ENCODE measurements at regions of chr15 and their contacts with region 1.

Region 1: DNA sequence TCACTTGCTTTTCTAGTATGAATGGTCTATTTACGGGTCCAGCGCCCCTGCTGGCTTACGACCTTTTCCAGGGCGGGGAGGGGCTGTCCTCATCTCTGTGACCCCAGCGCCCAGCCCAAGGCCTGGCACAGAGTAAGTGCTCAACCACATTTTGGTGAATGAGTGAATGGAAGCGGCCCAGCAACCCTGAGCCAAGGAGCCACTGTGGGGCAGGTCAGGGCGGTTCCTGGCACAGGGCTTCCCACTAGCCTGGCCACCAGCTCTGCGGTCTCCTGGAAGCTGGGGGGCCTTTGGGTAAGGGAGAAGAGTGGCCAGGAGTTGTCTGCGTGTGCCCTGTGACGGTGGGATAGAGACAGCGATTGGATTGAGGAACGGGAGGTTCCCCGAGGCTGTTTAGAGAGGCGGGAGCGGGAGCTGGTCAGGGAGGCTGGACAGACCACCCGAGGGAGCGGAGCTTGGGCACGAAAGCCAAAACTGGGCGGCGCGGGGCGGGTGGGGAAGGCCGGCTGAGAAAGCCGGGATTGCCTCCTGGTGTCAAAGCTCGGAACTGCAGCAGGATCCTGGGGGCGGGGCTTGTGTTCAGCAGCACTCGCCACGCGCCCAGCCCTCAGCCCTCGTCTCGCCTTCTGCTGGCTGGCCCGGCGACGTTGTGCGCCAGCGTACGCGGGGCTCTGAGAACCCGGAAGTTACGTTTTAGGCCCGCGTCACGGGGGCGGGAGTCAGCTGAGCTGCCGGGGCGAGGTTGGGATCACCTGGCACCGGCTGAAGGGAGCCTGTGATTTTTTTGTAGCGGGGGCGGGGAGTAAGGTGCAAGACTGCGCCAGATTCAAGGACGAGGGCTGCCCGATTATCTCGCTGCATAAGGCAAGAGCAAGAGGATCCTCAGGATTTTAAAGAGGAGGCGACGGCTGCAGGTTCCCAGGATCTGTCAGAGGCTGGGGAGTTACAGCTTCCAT is at the start of gene VPS18:
- DNase-seq: peak; percentile 96
- H3K4me3 ChIP-seq: peak within 1 kb of the TSS; percentile 86 to 91 (median 88)
- H3K27ac ChIP-seq: peak within 1 kb of the TSS; percentile 86
- H3K4me1 ChIP-seq: peaks cover 14% of the 10 kb centered on the region
- H3K27me3 ChIP-seq: no peaks in the 10 kb centered on the region
- CTCF ChIP-seq: peak; percentile 77 to 95
- POLR2A ChIP-seq: peak; percentile 60
- total RNA-seq, gene VPS18: 32.8 and 33.3 TPM in 2 replicates

Region 2: DNA sequence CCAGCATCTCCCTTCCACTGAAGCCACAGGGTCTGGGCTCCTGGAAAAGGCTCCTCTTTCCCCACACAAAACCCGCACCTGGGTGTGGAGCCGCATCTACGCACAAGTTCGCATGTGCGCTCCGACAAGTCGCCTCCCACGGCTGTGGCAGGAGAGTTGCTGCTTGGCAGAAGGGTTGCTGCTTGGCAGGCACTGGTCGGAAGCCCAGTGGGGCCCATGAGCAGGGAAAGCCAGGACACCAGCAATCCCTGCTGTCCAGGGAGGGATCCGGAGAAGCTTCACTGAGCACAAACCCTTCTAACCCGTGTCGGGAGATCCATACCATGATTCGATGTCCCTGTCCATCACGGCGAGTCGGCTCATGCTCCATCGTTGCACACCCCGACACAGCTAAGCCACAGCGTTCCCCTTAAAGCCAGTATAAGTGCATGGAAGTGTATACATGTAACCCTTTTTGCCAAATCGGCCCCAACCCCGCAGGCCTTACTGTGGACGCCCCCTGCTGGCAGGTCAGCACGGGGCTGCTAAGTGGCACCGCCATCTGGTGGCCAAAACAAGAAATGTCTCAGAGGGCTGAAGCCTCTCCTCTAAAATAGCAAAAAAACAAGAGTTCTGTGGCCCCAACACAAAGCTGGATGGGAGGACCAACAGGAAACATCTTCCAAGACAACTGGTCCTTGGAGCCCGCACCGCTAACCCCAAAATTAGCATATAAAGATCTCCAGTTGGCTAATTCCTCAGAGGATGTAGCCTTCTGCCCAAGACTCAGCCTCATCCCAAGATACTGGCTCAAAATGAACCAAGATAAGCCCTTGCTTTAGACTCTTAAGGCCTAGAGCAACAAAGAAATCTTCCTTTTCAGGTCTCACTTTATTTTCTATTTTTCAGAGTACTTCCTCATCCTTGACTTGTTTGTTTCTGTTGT is 619.4 kb before region 1 on chr15:
- CTCF ChIA-PET with region 1: no interaction called
- POLR2A ChIA-PET with region 1: no interaction called
- dilution Hi-C with region 1: no loop called
- intact Hi-C with region 1: no loop called
- DNase-seq: peak; percentile 82
- H3K4me3 ChIP-seq: no peak overlapping the region
- H3K27ac ChIP-seq: no peak overlapping the region
- H3K4me1 ChIP-seq: no peaks in the 10 kb centered on the region
- H3K27me3 ChIP-seq: peaks cover 17 to 25% of the 10 kb centered on the region in 2 experiments
- CTCF ChIP-seq: peak; percentile 100
- POLR2A ChIP-seq: no peak

Region 3: DNA sequence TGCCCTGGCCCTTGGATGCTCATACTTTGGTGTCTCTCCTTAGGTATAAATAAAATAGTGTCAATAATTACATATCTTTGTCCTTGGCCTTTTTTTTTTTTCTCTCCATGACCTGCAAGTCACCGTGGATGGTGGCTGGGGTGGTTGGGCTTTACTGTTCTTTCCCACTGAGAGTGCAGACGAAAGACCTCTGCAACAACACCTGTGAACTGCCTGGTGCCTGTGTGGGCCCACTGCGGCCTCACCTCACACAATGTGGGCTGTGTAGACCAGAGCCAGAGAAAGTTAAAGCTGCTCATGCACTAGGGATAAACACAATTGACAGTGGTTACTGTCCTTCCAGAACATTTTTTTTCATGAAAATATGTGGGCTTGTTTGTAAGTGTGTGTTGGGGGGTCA is 368.2 kb before region 1 on chr15:
- CTCF ChIA-PET with region 1: interaction called, 12 read pairs
- POLR2A ChIA-PET with region 1: no interaction called
- dilution Hi-C with region 1: no loop called
- intact Hi-C with region 1: no loop called
- DNase-seq: no peak
- H3K4me3 ChIP-seq: no peak overlapping the region
- H3K27ac ChIP-seq: no peak overlapping the region
- H3K4me1 ChIP-seq: no peaks in the 10 kb centered on the region
- H3K27me3 ChIP-seq: no peaks in the 10 kb centered on the region
- CTCF ChIP-seq: no peak
- POLR2A ChIP-seq: no peak

Region 4: DNA sequence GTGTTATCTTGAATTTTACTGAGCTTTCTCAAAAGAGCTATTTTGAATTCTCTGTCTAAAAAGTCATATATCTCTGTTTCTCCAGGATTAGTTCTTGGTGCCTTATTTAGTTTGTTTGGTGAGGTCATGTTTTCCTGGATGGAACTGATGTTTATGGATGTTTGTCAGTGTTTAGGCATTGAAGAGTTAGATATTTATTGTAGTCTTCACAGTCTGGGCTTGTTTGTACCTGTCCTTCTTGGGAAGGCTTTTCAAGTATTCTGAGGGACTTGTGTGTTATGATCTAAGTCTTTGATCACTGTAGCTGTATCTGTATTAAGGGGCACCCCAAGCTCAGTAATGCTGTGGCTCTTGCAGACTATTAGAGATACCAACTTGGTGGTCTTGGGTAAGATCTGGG is 209.6 kb before region 1 on chr15:
- CTCF ChIA-PET with region 1: interaction called, 15 read pairs
- POLR2A ChIA-PET with region 1: no interaction called
- dilution Hi-C with region 1: no loop called
- intact Hi-C with region 1: loop called (anchors 1 kb)
- DNase-seq: no peak
- H3K4me3 ChIP-seq: no peak overlapping the region
- H3K27ac ChIP-seq: no peak overlapping the region
- H3K4me1 ChIP-seq: no peaks in the 10 kb centered on the region
- H3K27me3 ChIP-seq: no peaks in the 10 kb centered on the region
- CTCF ChIP-seq: no peak
- POLR2A ChIP-seq: no peak

Region 5: GRCh38 chr15:40743921-40744814 is 149.8 kb before region 1 on chr15:
- CTCF ChIA-PET with region 1: interaction called, 21 read pairs
- POLR2A ChIA-PET with region 1: no interaction called
- dilution Hi-C with region 1: no loop called
- intact Hi-C with region 1: loop called (anchors 1 kb)
- DNase-seq: no peak
- H3K4me3 ChIP-seq: no peak overlapping the region
- H3K27ac ChIP-seq: no peak overlapping the region
- H3K4me1 ChIP-seq: no peaks in the 10 kb centered on the region
- H3K27me3 ChIP-seq: no peaks in the 10 kb centered on the region
- CTCF ChIP-seq: no peak
- POLR2A ChIP-seq: no peak

Region 6: DNA sequence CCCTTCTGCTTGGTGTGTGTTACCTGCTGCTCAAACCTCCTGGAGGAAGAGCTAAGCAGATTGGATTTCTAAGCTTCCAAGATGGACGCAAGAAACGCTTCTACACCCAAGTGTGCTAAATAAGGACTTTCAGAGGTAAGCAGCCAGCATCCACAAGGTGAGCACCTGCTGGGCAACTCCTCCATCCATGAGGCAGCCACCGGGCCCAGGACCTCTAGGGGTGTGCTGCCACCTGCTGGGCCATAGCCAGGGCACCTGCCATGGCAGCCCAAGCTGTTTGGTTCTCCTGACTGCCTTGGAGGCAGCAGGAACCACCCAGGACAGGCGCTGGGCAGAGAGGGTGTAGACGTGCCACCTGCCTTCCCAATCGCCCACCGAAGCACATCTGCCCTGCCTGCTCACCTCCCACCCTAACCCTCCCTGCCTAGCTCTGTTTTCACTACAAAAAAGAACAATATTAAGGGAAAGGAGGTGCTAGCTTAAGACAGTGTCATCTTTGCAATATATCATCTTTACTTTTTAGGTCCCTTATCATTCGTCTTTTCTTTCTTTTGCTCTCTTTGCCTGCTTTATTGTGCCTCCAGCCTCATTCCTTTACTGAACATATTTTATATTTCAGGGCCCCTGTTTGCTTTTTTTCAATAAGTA is 111.3 kb before region 1 on chr15:
- CTCF ChIA-PET with region 1: interaction called, 17 read pairs
- POLR2A ChIA-PET with region 1: no interaction called
- dilution Hi-C with region 1: no loop called
- intact Hi-C with region 1: loop called (anchors 5 kb)
- DNase-seq: peak; percentile 63
- H3K4me3 ChIP-seq: no peak overlapping the region
- H3K27ac ChIP-seq: no peak overlapping the region
- H3K4me1 ChIP-seq: peaks cover 11% of the 10 kb centered on the region
- H3K27me3 ChIP-seq: no peaks in the 10 kb centered on the region
- CTCF ChIP-seq: peak; percentile 61 to 88
- POLR2A ChIP-seq: no peak

Region 7: DNA sequence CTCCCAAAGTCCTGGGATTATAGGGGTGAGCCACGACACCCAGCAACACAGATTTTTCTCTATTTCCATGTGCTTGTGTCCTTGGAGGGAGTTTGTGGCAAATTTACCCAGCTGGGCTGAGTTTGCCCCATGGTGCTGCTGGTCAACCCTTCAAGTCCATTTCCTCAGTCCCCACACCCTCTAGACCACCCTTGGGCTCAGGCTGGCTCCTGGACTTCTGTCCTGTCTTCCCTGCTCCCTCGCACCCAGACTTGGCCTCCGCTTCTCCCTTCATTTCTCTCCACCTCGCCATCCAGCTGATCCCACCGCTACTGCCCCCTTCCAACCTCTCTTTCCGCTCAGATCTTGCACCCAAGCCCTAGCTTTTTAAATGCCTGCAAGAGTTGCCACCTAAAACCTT is 12.7 kb before region 1 on chr15:
- CTCF ChIA-PET with region 1: interaction called, 16 read pairs
- POLR2A ChIA-PET with region 1: no interaction called
- dilution Hi-C with region 1: no loop called
- intact Hi-C with region 1: no loop called
- DNase-seq: no peak
- H3K4me3 ChIP-seq: no peak overlapping the region
- H3K27ac ChIP-seq: no peak overlapping the region
- H3K4me1 ChIP-seq: no peaks in the 10 kb centered on the region
- H3K27me3 ChIP-seq: no peaks in the 10 kb centered on the region
- CTCF ChIP-seq: no peak
- POLR2A ChIP-seq: no peak

Region 8: GRCh38 chr15:41022487-41023090 is 128.6 kb after region 1 on chr15:
- CTCF ChIA-PET with region 1: interaction called, 16 read pairs
- POLR2A ChIA-PET with region 1: no interaction called
- dilution Hi-C with region 1: no loop called
- intact Hi-C with region 1: no loop called
- DNase-seq: peak; percentile 80
- H3K4me3 ChIP-seq: no peak overlapping the region
- H3K27ac ChIP-seq: no peak overlapping the region
- H3K4me1 ChIP-seq: peaks cover 32% of the 10 kb centered on the region
- H3K27me3 ChIP-seq: no peaks in the 10 kb centered on the region
- CTCF ChIP-seq: peak; percentile 67 to 73
- POLR2A ChIP-seq: no peak

Measured in endothelial cell of umbilical vein (primary cell).